Spleen (tissue), 13 donors: ENCODE measurements at regions of chr5 and their contacts with region 1.

Region 1: DNA sequence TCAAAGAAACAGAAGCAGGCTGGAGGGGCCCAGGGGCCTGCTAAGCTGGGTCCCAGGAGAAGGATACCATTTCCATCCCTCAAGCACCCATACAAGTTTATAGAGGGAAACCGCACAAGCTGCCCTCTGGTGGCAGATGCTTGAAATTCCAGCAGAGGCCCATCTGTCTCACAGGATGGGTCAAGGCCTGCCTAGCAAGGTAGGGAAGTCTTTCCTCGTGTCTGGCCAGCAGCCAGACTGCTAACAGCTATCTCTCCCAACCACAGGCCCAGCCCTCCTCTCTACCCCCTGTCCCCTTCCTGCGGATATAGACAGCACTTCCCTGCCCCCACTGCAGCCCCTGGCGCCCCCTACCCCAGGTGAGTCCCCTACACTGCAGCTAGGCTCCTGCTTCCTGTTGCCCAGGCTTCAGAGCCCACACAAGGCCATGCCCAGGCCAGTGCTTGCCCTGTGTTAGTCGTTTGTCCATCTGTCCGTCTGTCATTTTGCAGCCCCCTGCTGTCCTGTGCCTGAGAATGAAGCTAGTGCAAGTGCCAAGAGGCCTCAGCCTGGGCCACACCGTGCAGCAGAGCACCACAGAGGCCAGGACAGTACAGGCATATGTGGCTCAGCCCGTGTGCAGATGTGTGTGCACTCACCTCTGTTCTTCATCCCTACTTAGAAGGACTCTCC is 26.2 kb downstream of the TCF7 start:
- DNase-seq: peak; percentile 85
- H3K4me3 ChIP-seq: no peak overlapping the region
- H3K27ac ChIP-seq: peak overlapping the region in 6 of 8 donors; percentile 24 to 88 (median 48)
- H3K4me1 ChIP-seq: peaks cover 19 to 79% (median 56%) of the 10 kb centered on the region in 6 donors
- H3K27me3 ChIP-seq: no peaks in the 10 kb centered on the region
- CTCF ChIP-seq: peak; percentile 49 to 90 (median 80)
- POLR2A ChIP-seq: no peak

Region 2: DNA sequence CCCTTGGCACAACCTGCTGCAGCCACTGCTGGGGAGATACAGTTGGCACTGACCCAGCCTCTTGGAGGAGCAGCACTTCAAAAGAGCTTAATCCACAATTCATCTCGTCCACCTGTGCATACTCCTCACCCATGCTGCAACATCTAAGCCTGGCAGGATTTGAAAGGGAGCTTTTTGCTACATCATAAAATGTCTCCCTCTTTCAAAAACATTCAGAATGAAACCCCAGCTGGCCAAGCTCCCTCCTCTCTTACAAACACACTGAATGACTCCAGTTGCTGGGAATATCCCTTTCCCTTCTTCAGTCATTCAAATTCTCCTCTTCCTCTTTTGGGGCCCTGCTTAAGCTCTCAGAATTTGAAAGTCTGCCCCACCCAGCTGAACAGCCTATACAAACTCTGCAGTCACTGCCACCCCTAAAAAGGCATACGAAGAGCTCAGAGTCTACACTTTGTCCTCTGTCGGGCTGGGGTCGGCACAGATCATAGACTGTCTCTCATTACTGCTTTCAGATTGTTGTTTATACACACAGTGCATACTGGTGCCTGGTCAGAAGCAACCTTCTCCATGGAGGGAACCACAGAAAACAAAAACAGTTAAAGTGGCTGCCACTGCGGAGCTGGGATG is 163.4 kb before region 1 on chr5:
- intact Hi-C with region 1: no loop called
- DNase-seq: no peak
- H3K4me3 ChIP-seq: no peak overlapping the region
- H3K27ac ChIP-seq: no peak overlapping the region
- H3K4me1 ChIP-seq: peaks cover 0 to 3% (median 0%) of the 10 kb centered on the region in 6 donors
- H3K27me3 ChIP-seq: no peaks in the 10 kb centered on the region
- CTCF ChIP-seq: no peak
- POLR2A ChIP-seq: no peak

Region 3: GRCh38 chr5:134041570-134042411 is 98.9 kb before region 1 on chr5:
- intact Hi-C with region 1: loop called (anchors 5 kb)
- DNase-seq: no peak
- H3K4me3 ChIP-seq: no peak overlapping the region
- H3K27ac ChIP-seq: no peak overlapping the region
- H3K4me1 ChIP-seq: peaks cover 0 to 9% (median 0%) of the 10 kb centered on the region in 6 donors
- H3K27me3 ChIP-seq: no peaks in the 10 kb centered on the region
- CTCF ChIP-seq: no peak
- POLR2A ChIP-seq: no peak